ENCODE measurements at regions of chr18 and their contacts with region 1.

Region 1: DNA sequence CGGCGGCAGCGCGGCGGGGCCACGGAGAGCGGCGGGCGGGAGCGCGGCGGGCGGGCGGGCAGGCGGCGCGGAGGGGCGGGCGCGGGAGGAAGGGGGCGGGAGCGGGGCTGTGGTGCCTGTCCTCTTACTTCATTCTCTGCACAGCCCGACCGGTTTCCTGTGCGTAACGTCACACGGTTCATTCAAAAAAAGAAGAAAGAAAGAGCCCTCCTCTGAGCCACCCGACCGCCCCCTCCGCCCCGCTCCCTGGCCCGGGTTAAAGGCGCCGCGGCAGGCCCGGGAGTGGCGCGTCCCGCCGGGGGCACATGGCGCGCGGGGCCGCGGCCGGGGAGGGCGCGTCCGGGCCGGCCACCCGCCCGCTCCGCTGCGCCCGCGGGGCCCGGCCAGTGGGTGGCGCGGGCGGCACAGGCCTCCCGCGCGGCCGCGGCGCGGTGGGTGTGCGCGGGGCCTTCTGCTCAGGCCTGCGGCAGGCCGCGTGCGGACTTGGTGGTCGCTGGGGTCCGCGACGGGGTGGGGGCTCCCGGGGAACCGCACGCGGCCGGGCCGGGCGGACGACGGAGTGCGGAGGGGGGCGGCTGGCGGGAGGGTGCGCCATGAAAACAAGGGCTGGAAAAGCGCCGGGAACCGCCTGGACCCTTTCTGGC is 599 bp upstream of the BCL2 start:
- DNase-seq: peak; percentile 92
- ATAC-seq: peak; percentile 77
- H3K4me3 Mint-ChIP-seq: peak overlapping the region; percentile 93
- H3K27ac Mint-ChIP-seq: peak overlapping the region; percentile 94
- H3K4me1 Mint-ChIP-seq: peaks cover 22% of the 10 kb centered on the region
- H3K27me3 Mint-ChIP-seq: no peaks in the 10 kb centered on the region
- CTCF ChIP-seq: no peak

Region 2: GRCh38 chr18:62751341-62751821 is 568.8 kb before region 1 on chr18:
- CTCF ChIA-PET with region 1: no interaction called
- POLR2A ChIA-PET with region 1: no interaction called
- intact Hi-C with region 1: no loop called
- DNase-seq: peak; percentile 6
- ATAC-seq: no peak
- H3K4me3 Mint-ChIP-seq: no peak overlapping the region
- H3K27ac Mint-ChIP-seq: no peak overlapping the region
- H3K4me1 Mint-ChIP-seq: peaks cover 15% of the 10 kb centered on the region
- H3K27me3 Mint-ChIP-seq: no peaks in the 10 kb centered on the region
- CTCF ChIP-seq: no peak

Region 3: GRCh38 chr18:63016270-63016669 is 303.9 kb before region 1 on chr18:
- CTCF ChIA-PET with region 1: interaction called, 140 read pairs
- POLR2A ChIA-PET with region 1: interaction called, 13 read pairs
- intact Hi-C with region 1: loop called (anchors 2 kb)
- DNase-seq: peak; percentile 62
- ATAC-seq: peak; percentile 62
- H3K4me3 Mint-ChIP-seq: no peak overlapping the region
- H3K27ac Mint-ChIP-seq: no peak overlapping the region
- H3K4me1 Mint-ChIP-seq: no peaks in the 10 kb centered on the region
- H3K27me3 Mint-ChIP-seq: peaks cover 9% of the 10 kb centered on the region
- CTCF ChIP-seq: peak; percentile 89

Region 4: GRCh38 chr18:63037491-63037890 is 282.7 kb before region 1 on chr18:
- CTCF ChIA-PET with region 1: no interaction called
- POLR2A ChIA-PET with region 1: no interaction called
- intact Hi-C with region 1: no loop called
- DNase-seq: no peak
- ATAC-seq: no peak
- H3K4me3 Mint-ChIP-seq: no peak overlapping the region
- H3K27ac Mint-ChIP-seq: no peak overlapping the region
- H3K4me1 Mint-ChIP-seq: peaks cover 22% of the 10 kb centered on the region
- H3K27me3 Mint-ChIP-seq: peaks cover 1% of the 10 kb centered on the region
- CTCF ChIP-seq: no peak

Region 5: DNA sequence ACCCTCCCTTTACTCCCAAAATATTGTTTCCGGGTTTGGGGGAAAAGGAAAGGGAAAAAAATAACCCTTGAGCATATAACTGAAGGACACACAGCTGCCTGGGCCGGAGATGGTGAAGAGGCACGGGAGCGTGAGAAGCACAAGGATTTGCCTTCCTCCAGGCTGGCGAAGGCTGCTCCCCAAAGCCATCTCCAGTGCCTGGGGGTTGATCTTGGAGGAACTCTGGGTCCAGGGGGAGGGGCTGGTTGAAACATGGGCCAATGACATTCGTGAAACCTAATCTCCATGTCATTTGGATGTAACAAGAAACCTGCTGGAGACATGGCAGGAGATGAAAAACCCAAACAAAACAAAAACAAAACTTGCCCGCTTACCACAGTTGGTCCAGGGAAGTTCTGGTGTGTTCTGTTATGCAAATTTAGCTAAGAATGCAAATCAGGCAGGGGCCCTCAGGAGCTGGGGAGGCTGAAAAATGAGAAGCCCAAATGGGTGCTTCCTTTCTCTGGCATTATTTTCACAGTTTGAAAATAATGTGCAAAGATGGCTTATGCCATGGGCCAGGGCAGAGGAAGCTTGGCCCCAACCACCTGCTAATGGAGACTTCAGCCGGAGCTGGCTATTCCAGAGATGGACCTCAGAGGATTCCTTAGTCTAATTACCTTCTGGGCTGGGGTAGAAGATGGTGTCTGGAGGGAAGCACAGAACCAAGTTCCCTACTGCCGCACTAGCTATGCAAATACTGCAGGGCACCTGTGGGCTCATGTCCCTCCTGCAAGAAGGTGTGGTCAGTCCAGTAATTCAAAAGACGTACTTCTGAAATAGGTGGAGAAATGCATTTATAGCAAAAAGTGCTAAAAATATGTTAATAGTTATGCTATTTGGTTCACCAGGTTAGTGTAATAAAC is 181.5 kb before region 1 on chr18:
- CTCF ChIA-PET with region 1: interaction called, 16 read pairs
- POLR2A ChIA-PET with region 1: interaction called, 7 read pairs
- intact Hi-C with region 1: no loop called
- DNase-seq: peak; percentile 36
- ATAC-seq: peak; percentile 21
- H3K4me3 Mint-ChIP-seq: peak overlapping the region; percentile 75
- H3K27ac Mint-ChIP-seq: peak overlapping the region; percentile 88
- H3K4me1 Mint-ChIP-seq: peaks cover 66% of the 10 kb centered on the region
- H3K27me3 Mint-ChIP-seq: no peaks in the 10 kb centered on the region
- CTCF ChIP-seq: no peak

Region 6: DNA sequence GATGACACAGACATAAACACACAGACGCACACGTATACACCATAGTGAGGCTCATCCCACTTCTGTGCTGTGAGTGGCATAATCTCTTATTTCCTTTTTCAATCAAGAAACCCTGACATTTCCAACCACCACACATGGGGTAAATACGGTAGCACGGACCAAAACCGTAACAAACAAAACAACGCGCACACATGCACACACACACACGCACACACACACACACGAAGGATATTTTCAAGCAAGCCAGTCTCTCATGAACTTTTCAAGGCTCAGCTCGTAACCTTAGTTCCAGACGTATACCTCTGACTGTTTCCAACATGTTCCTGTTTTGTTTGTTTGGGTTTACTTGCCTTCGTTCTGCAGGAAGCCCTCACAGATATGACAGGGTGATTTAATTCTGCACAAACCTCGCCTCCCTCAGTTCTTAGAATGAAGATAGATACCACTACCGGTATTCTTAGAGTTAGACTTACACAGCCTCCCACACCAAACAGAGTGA is 120.4 kb before region 1 on chr18:
- CTCF ChIA-PET with region 1: interaction called, 71 read pairs
- POLR2A ChIA-PET with region 1: interaction called, 40 read pairs
- intact Hi-C with region 1: no loop called
- DNase-seq: peak; percentile 69
- ATAC-seq: peak; percentile 80
- H3K4me3 Mint-ChIP-seq: no peak overlapping the region
- H3K27ac Mint-ChIP-seq: no peak overlapping the region
- H3K4me1 Mint-ChIP-seq: peaks cover 47% of the 10 kb centered on the region
- H3K27me3 Mint-ChIP-seq: no peaks in the 10 kb centered on the region
- CTCF ChIP-seq: no peak

Region 7: DNA sequence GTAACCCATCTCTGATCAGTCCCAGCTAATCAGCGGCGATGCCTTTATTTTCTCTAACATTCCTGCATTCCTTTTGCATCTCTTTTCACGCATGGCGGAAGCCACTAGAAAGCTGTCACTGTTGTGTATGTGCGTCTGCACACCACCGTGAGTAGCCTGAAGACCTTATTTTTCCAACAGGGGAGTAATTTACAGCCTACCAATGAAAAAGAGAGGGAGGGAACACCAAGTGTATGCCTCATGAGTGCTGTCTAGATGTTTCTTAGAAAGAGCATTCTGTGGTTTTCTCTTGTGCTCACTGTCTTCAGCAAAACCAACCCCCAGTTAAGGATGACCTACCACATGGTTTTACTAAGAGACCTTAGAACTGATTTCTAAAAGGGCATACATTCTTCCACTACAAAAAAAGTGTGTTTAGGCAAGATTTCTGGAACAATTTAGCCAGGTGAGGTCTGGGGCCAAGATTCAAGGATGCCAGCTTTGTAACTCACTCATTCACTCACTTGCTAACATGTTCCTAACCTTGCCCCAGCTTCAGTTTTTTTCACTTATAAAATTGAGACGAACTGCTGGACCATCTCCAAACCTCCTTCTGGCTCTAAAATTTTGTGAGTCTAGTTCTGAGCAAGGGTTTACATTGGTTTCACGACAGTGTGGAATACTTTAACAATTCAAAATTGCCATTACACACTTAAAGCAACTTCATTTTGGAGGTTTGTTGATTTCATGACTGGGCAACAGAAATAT is 52.0 kb before region 1 on chr18:
- CTCF ChIA-PET with region 1: interaction called, 25 read pairs
- POLR2A ChIA-PET with region 1: interaction called, 3 read pairs
- intact Hi-C with region 1: no loop called
- DNase-seq: peak; percentile 37
- ATAC-seq: peak; percentile 91
- H3K4me3 Mint-ChIP-seq: peak overlapping the region; percentile 57
- H3K27ac Mint-ChIP-seq: peak overlapping the region; percentile 84
- H3K4me1 Mint-ChIP-seq: peaks cover 83% of the 10 kb centered on the region
- H3K27me3 Mint-ChIP-seq: no peaks in the 10 kb centered on the region
- CTCF ChIP-seq: no peak

Region 8: GRCh38 chr18:63331105-63331504 is 10.9 kb after region 1 on chr18:
- CTCF ChIA-PET with region 1: interaction called, 81 read pairs
- POLR2A ChIA-PET with region 1: interaction called, 5 read pairs
- intact Hi-C with region 1: no loop called
- DNase-seq: no peak
- ATAC-seq: no peak
- H3K4me3 Mint-ChIP-seq: no peak overlapping the region
- H3K27ac Mint-ChIP-seq: no peak overlapping the region
- H3K4me1 Mint-ChIP-seq: no peaks in the 10 kb centered on the region
- H3K27me3 Mint-ChIP-seq: no peaks in the 10 kb centered on the region
- CTCF ChIP-seq: no peak